Activated CD8-positive, alpha-beta T cell treated with anti-CD3 and anti-CD28 coated beads for 36 hours (primary cell): ENCODE measurements at regions of chr4 and their contacts with region 1.

Region 1: DNA sequence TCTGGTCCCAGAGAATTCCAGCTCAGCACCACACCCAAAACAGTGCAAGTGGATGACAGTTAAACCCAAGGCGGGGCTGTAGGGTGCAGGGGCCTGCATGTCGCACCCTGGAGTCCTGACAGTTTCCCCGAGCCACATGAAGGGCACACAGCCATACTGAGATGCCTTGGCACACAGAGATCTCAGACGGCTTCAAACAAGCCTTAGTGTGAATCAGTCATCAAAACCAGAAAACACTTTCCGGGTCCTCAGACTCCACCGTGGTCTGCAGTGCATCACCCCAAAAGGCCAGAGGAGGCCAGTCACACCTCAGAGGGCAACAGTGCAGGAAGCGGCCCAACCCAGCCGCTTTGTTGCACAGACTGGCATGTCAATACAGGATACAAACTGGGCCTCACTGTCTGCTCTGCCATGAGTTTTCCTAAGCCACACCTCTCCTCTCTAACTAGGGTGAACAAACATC is 64.6 kb upstream of the ENPP6 start:
- DNase-seq: peak; percentile 90
- ATAC-seq: peak; percentile 84
- H3K4me3 Mint-ChIP-seq: peak overlapping the region; percentile 52
- H3K27ac Mint-ChIP-seq: peak overlapping the region; percentile 96
- H3K4me1 Mint-ChIP-seq: peaks cover 69% of the 10 kb centered on the region
- H3K27me3 Mint-ChIP-seq: no peaks in the 10 kb centered on the region
- CTCF ChIP-seq: peak; percentile 58

Region 2: DNA sequence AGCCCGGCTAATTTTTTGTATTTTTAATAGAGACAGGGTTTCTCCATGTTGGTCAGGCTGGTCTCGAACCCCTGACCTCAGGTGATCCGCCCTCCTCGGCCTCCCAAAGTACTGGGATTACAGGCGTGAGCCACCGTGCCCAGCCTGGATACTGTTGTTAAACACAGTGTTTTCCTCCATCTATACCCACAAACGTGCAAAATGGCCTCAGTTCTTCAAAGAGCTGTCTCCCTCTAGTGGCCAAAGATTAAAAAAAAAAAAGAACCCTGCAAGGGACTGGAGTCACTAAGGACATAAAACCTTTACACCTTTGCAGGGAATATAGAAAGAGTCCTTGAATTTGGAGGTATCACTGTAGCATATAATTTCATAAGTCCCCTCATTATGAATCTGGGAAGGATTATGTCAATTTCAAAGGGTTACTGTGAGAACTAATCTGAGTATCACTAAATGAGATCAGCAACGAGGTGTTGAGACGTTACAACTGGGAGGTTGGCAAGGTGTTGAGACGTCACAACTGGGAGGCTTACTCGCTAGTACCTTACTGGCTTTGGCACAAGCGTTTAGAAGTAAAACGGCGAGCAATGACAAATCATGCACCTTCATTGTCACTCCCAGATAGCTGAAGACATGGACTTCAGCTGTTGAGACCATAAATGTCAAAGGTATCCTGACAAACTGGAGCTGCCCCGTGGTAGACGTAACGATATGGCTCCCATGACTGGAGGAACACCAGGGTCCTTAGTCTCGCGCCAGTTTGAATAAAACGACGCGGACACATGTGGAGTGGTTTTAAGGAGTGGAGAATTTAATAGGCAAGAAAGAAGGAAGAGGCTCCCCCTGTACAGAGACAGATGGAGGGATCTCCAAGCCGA is 31.2 kb before region 1 on chr4:
- CTCF ChIA-PET with region 1: interaction called, 11 read pairs
- POLR2A ChIA-PET with region 1: no interaction called
- intact Hi-C with region 1: no loop called
- DNase-seq: peak; percentile 37
- ATAC-seq: peak; percentile 67
- H3K4me3 Mint-ChIP-seq: no peak overlapping the region
- H3K27ac Mint-ChIP-seq: peak overlapping the region; percentile 87
- H3K4me1 Mint-ChIP-seq: peaks cover 20% of the 10 kb centered on the region
- H3K27me3 Mint-ChIP-seq: peaks cover 4% of the 10 kb centered on the region
- CTCF ChIP-seq: peak; percentile 78

Region 3: DNA sequence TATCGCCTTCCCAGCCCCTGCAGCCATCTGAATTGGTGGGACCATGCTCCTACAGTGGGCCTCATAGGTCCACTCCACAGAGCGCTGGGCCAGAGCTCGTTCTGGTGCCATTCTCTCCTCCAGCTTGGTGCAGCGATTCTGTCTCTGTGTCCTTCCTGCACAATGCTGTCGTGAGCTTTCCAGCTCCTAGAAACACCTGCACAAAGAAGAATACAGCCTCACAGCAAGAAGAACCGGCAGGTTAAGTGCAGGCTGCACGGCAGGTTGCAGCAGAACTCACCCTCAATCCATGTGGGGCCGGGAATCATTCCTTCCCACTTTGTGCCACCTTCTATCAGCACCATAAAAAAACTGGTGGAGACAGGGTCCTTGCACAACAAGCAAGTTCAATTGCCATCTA is 36.6 kb after region 1 on chr4:
- CTCF ChIA-PET with region 1: interaction called, 9 read pairs
- POLR2A ChIA-PET with region 1: interaction called, 15 read pairs
- intact Hi-C with region 1: loop called (anchors 5 kb)
- DNase-seq: no peak
- ATAC-seq: peak; percentile 2
- H3K4me3 Mint-ChIP-seq: peak overlapping the region; percentile 22
- H3K27ac Mint-ChIP-seq: peak overlapping the region; percentile 97
- H3K4me1 Mint-ChIP-seq: peaks cover 72% of the 10 kb centered on the region
- H3K27me3 Mint-ChIP-seq: no peaks in the 10 kb centered on the region
- CTCF ChIP-seq: no peak

Region 4: GRCh38 chr4:184474263-184475095 is 192.2 kb after region 1 on chr4 and contains the start of gene IRF2:
- CTCF ChIA-PET with region 1: interaction called, 8 read pairs
- POLR2A ChIA-PET with region 1: interaction called, 9 read pairs
- intact Hi-C with region 1: loop called (anchors 5 kb)
- DNase-seq: peak; percentile 98
- ATAC-seq: peak; percentile 83
- H3K4me3 Mint-ChIP-seq: peak within 1 kb of the TSS; percentile 94
- H3K27ac Mint-ChIP-seq: peak within 1 kb of the TSS; percentile 98
- H3K4me1 Mint-ChIP-seq: peaks cover 50% of the 10 kb centered on the region
- H3K27me3 Mint-ChIP-seq: no peaks in the 10 kb centered on the region
- CTCF ChIP-seq: no peak
- total RNA-seq, gene IRF2: 48.1 to 56.4 TPM

Region 5: GRCh38 chr4:184733654-184734524 is 451.6 kb after region 1 on chr4 and contains the start of gene CENPU:
- CTCF ChIA-PET with region 1: no interaction called
- POLR2A ChIA-PET with region 1: interaction called, 4 read pairs
- intact Hi-C with region 1: loop called (anchors 10 kb)
- DNase-seq: peak; percentile 96
- ATAC-seq: peak; percentile 97
- H3K4me3 Mint-ChIP-seq: peak within 1 kb of the TSS; percentile 89
- H3K27ac Mint-ChIP-seq: peak within 1 kb of the TSS; percentile 86
- H3K4me1 Mint-ChIP-seq: peaks cover 21% of the 10 kb centered on the region
- H3K27me3 Mint-ChIP-seq: no peaks in the 10 kb centered on the region
- CTCF ChIP-seq: no peak
- total RNA-seq, gene CENPU: 49.7 to 53.4 TPM